Sigmoid colon (tissue), 7 donors: ENCODE measurements at regions of chr17 and their contacts with region 1.

Region 1: GRCh38 chr17:76714822-76715495 is 4.2 kb upstream of the MXRA7 start:
- DNase-seq: peak; percentile 80
- H3K4me3 ChIP-seq: no peak overlapping the region
- H3K27ac ChIP-seq: peak overlapping the region; percentile 43 to 92 (median 68)
- H3K4me1 ChIP-seq: peaks cover 0 to 47% (median 35%) of the 10 kb centered on the region in 4 donors
- H3K27me3 ChIP-seq: no peaks in the 10 kb centered on the region
- CTCF ChIP-seq: peak; percentile 70 to 82 (median 74)
- EP300 ChIP-seq: no peak
- POLR2A ChIP-seq: no peak

Region 2: DNA sequence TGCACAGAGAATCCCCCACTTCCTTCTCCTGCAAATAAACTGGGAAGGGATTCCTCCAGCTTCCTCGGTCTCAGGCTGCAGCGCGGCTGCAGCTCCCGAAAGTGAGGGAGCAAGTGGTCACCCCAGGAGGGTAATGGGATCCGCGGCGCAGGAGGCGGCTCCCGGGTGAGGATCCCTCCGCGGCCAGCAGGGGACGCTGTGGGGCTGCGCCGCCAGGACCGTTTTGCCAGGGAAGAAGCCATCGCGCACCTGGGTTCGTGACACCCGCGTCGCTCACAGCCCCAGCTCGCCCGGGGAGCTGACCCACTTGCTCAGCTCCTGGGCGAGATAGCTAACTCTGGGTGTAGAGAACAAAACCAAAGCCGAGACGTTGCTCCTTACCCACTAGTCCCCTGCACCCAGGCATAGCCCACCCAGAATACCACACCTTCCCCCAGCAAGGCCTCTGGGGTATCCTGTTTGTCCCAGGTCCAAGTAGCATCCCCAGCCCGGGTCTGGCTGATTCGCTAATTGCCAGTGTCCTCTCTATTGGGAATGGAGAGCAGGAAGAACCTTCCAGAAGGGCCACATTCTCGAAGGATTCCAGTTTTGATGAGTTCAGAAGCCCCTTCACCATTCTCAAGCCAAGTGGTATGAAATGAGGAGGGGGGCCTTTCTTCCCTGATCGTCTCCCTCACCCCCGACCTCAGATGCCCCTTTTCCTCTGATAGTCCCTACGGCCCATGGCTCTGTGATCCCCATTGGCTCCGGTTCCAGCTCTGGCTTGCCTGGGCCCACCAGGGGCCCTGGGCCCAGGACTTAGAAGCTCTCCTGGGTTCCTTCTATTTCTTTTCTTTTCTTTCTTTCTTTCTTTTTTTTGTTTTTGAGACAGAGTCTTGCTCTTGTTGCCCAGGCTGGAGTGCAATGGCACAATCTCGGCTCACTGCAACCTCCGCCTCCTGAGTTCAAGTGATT is 191.6 kb before region 1 on chr17:
- intact Hi-C with region 1: loop called (anchors 5 kb)
- DNase-seq: peak; percentile 85
- H3K4me3 ChIP-seq: no peak overlapping the region
- H3K27ac ChIP-seq: no peak overlapping the region
- H3K4me1 ChIP-seq: peaks cover 0 to 27% (median 17%) of the 10 kb centered on the region in 4 donors
- H3K27me3 ChIP-seq: peaks cover 0 to 30% (median 9%) of the 10 kb centered on the region in 3 donors
- CTCF ChIP-seq: peak; percentile 96 to 100 (median 99)
- EP300 ChIP-seq: no peak
- POLR2A ChIP-seq: no peak

Region 3: DNA sequence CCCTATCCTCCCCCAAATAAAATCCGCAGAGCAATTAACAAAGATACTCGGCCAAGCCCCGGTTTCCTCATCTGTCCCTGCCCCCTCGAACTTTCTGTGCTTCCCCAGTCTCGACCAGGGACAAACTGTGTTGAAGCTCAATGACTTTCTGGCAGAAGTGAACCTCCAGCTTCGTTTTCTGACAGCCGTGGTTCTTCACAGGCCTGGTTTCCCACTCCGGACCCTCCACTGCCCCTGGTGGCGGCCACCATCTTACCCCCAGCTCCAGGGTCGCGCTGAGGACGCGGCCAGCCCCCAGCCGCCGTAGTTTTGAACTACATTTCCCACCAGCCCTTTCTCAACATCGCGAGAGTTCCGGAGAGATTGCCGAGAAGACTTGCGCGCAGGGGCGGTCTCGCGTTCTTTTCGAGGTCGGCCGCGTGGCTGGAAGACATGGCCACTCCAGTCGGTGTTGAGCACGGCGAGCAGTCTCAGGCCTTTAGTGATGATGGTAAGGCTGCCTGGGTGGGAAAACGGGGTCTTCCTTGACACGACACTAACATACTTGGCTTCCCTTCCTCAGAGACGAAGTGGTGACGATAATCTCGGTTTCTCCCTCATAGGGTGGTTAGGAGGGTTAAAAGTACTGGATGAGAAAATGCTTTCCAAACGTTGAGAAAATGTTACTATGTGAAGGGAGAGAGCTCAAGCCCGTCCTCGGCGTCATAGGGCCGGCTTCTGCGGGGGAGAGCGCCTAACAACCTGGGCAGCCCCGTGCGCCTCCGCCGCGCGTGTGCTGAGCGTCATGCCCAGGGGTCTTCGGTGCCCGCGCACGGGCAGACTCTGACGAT is 157.4 kb before region 1 on chr17:
- intact Hi-C with region 1: loop called (anchors 5 kb)
- DNase-seq: peak; percentile 97
- H3K4me3 ChIP-seq: peak overlapping the region; percentile 53 to 75 (median 68)
- H3K27ac ChIP-seq: peak overlapping the region; percentile 84 to 95 (median 87)
- H3K4me1 ChIP-seq: peaks cover 0 to 52% (median 51%) of the 10 kb centered on the region in 4 donors
- H3K27me3 ChIP-seq: no peaks in the 10 kb centered on the region
- CTCF ChIP-seq: peak; percentile 43 to 72 (median 57)
- EP300 ChIP-seq: peak in 1 of 4 donors; percentile 7
- POLR2A ChIP-seq: peak; percentile 64 to 70

Region 4: DNA sequence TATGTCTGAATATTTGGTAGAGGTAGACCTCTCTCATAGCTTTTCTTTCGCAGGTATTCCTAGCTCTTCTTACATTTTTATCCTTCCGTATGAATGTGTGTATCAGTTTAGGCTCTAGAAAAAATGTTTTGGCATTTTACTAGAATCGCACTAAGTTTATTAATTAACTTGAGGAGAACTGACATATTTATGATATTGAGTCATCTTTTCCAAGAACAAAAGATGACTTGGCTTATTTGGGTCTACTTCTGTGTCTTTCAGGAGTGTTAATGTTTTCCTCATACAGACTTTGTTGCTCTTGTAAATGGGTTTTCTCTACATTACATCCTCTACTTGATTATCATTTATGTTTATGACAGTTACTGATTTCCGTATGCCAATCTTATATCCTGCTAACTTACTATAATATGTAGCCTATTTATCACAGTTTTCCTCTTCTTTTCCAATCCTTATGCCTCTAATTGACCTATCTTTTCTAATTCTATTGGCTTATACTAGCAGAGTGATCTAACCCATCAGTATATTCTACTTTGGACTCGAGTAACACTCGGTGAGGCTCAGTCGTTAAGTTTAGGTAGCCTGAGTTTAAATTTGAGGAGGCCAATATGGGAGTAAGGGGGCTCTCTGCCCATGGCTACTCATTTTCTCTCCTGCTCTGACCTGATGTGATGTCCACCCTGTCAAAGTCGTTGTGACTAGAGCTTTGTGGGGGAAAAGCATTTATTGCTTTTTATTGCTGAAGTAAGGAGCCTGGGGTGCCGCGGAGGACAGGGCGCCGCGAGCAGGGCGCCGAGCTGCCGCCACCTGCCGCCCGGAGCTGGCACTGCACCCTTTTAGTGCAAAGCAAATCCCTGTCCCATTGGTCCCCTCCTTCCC is 91.5 kb before region 1 on chr17:
- intact Hi-C with region 1: loop called (anchors 5 kb)
- DNase-seq: peak; percentile 87
- H3K4me3 ChIP-seq: no peak overlapping the region
- H3K27ac ChIP-seq: no peak overlapping the region
- H3K4me1 ChIP-seq: peaks cover 0 to 9% (median 4%) of the 10 kb centered on the region in 4 donors
- H3K27me3 ChIP-seq: no peaks in the 10 kb centered on the region
- CTCF ChIP-seq: peak; percentile 84 to 93 (median 92)
- EP300 ChIP-seq: no peak
- POLR2A ChIP-seq: no peak

Region 5: GRCh38 chr17:76643553-76644148 is 71.3 kb before region 1 on chr17 and contains the start of gene ST6GALNAC1:
- intact Hi-C with region 1: no loop called
- DNase-seq: peak; percentile 45
- H3K4me3 ChIP-seq: peak within 1 kb of the TSS in 1 of 4 donors; percentile 15
- H3K27ac ChIP-seq: peak within 1 kb of the TSS in 1 of 4 donors; percentile 25
- H3K4me1 ChIP-seq: no peaks in the 10 kb centered on the region
- H3K27me3 ChIP-seq: no peaks in the 10 kb centered on the region
- CTCF ChIP-seq: no peak
- EP300 ChIP-seq: no peak
- POLR2A ChIP-seq: peak in 1 of 2 donors; percentile 71
- total RNA-seq, gene ST6GALNAC1: 0.81 to 4.6 (median 2.2) TPM

Region 6: GRCh38 chr17:76671123-76671911 is 43.6 kb before region 1 on chr17:
- intact Hi-C with region 1: loop called (anchors 5 kb)
- DNase-seq: peak; percentile 100
- H3K4me3 ChIP-seq: peak overlapping the region; percentile 41 to 65 (median 59)
- H3K27ac ChIP-seq: peak overlapping the region; percentile 81 to 90 (median 86)
- H3K4me1 ChIP-seq: peaks cover 0 to 16% (median 10%) of the 10 kb centered on the region in 4 donors
- H3K27me3 ChIP-seq: no peaks in the 10 kb centered on the region
- CTCF ChIP-seq: no peak
- EP300 ChIP-seq: no peak
- POLR2A ChIP-seq: no peak

Region 7: DNA sequence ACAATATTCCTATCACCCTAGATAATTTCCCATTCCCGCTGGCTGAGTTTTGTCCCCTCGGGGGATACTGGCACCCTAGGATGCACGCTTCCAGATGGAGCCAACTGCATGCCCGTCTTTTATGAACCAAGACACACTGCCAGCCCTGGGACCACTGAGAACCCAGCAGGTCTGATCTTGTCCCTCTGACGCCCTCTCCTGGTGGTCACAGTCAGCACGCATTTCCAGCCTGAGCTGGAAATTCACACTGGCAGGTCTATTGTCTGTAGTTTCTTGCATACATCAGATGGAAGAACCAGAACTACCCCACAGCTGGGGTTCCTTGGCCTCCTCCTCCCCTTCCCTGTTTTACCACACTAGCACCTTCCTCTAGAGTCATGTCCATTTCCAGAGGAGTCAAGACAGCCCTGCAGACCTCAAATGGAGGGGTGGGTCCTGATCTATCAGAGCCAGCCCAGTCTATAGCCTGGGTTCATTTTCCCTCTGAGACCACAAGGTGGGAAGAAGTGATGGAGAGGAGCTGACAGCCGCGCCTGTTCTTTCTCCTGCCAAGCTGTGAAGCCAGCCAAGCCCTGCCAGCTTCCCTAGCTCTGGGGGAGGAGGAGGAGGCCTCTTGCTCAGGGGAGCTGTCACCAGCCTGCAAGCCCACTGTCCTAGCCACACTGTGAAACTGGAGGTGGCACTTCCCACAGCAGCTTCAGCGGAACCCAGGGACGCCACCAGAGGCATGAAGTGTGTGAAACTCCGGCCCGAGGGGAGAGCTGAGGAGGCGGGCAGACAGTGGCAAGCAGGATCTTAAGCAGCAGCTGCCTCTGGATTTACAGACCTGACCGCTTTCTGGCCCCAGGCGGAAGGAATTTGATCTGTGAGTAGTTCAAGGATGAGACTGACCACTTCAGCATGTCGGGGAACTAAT is 33.5 kb before region 1 on chr17:
- intact Hi-C with region 1: loop called (anchors 2 kb)
- DNase-seq: peak; percentile 85
- H3K4me3 ChIP-seq: no peak overlapping the region
- H3K27ac ChIP-seq: peak overlapping the region; percentile 74 to 98 (median 93)
- H3K4me1 ChIP-seq: peaks cover 3 to 63% (median 62%) of the 10 kb centered on the region in 4 donors
- H3K27me3 ChIP-seq: no peaks in the 10 kb centered on the region
- CTCF ChIP-seq: peak; percentile 66 to 88 (median 78)
- EP300 ChIP-seq: no peak
- POLR2A ChIP-seq: no peak

Region 8: GRCh38 chr17:76687308-76688164 is 27.4 kb before region 1 on chr17:
- intact Hi-C with region 1: loop called (anchors 2 kb)
- DNase-seq: peak; percentile 90
- H3K4me3 ChIP-seq: peak overlapping the region in 2 of 4 donors; percentile 12
- H3K27ac ChIP-seq: peak overlapping the region; percentile 90 to 98 (median 93)
- H3K4me1 ChIP-seq: peaks cover 2 to 100% (median 97%) of the 10 kb centered on the region in 4 donors
- H3K27me3 ChIP-seq: no peaks in the 10 kb centered on the region
- CTCF ChIP-seq: no peak
- EP300 ChIP-seq: peak in 1 of 4 donors; percentile 80
- POLR2A ChIP-seq: peak in 1 of 2 donors; percentile 23